ENCODE measurements at regions of chr3 and their contacts with region 1.

Region 1: GRCh38 chr3:43378066-43378935 is 92.0 kb downstream of the SNRK start:
- DNase-seq: peak; percentile 31
- ATAC-seq: peak; percentile 84
- H3K4me3 ChIP-seq: no peak overlapping the region
- H3K27ac ChIP-seq: no peak overlapping the region
- H3K4me1 ChIP-seq: no peaks in the 10 kb centered on the region; the same call in 1 of the 2 replicates
- H3K27me3 ChIP-seq: no peaks in the 10 kb centered on the region
- CTCF ChIP-seq: peak; percentile 80
- EP300 ChIP-seq: no peak
- POLR2A ChIP-seq: no peak
- RAD21 ChIP-seq: peak; percentile 68

Region 2: DNA sequence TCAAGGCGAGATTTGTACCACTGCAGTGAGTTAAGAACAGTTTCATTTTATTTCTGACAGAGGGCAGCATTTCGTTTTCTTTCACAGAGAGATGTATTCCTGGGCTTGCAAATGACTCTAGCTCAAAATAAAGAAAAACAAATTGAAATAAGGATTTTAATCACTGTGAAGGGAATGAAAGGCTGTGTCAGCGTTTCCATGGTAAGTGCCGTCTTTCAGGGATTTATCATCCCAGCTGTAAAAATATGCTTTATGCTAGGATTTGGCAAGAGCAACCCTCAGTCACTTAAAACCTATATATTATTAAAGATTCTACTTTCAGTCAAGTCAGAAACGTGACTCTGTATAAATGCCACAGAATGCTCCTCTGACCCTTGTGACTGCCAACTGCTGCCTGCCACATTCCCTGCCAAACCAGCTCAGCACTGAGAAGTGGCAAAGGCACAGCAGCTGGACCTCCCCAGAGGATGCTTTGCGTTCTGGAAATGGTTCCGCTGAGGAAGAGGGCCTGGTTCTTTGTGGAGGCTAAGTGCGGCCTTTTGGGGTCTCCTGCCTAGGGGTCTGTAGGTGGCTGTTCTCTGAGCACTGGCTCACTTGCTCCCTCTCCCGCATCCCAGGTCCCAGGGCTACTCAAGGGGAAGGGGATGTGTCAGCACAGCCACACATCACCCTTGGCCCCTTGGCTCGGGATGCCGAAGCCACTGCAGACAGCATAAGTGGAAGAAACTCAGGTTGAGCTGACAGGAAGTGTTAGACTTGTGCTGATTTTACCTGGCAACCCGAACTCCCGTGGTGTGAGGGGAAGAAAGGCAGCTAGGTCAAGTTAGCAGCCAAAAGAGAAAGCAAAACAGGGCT is 215.8 kb before region 1 on chr3:
- CTCF ChIA-PET with region 1: interaction called, 5 read pairs
- POLR2A ChIA-PET with region 1: no interaction called
- in situ Hi-C with region 1: no loop called
- intact Hi-C with region 1: loop called (anchors 1 kb)
- DNase-seq: peak; percentile 24
- ATAC-seq: peak; percentile 62
- H3K4me3 ChIP-seq: no peak overlapping the region
- H3K27ac ChIP-seq: no peak overlapping the region
- H3K4me1 ChIP-seq: no peaks in the 10 kb centered on the region
- H3K27me3 ChIP-seq: peaks cover 0 to 8% of the 10 kb centered on the region in 2 experiments; a peak in 4 of 5 replicates
- CTCF ChIP-seq: peak; percentile 53
- EP300 ChIP-seq: no peak
- POLR2A ChIP-seq: no peak
- RAD21 ChIP-seq: no peak

Measured in HepG2 (cell line).